Activated T-helper 2 cell treated with anti-CD3 and anti-CD28 coated beads, Interferon-gamma antibody, Interleukin-2, Interleukin-4, amounts not matched to agents 10 μg/mL and 5 μg/mL and 100 μg/mL, durations not matched to agents 14 hours and 24 hours and 36 hours (primary cell): ENCODE measurements at regions of chr1 and their contacts with region 1.

Region 1: GRCh38 chr1:223748773-223749733 is 36.7 kb downstream of the CAPN2 start:
- DNase-seq: peak; percentile 45
- H3K4me3 Mint-ChIP-seq: peak overlapping the region; percentile 53
- H3K27ac Mint-ChIP-seq: peak overlapping the region; percentile 7
- H3K4me1 Mint-ChIP-seq: peaks cover 15% of the 10 kb centered on the region
- H3K27me3 Mint-ChIP-seq: no peaks in the 10 kb centered on the region

Region 2: DNA sequence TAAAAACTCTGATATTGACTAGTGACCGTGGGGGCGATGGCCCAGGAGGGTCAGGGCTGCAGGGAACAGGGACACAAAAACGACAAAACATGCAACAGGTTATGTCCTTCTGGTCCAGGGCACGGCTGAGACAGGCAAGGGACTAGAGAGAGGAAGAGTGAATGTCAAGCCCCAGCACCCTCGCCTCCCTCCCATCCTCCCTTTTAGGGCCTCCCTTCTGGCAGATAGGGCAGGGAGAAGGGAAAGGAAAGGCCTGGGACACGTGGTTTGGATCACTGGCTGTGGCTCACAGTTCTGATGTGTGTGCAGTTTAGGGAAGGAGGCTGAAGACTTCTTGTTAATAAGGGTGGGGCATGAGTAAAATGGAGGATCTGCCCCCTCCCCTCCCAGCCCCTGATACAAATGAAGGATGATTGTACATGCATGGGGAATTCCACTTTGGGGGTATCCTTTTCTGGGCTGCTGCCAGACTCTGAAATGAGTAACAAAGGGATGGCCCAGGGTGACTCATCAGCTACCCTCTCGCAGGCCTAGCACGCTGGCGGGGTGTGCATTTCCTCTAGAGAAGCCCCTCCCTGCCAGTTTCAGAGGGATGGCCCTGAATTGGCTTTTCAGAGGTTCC is 22.6 kb before region 1 on chr1:
- intact Hi-C with region 1: loop called (anchors 2 kb)
- DNase-seq: peak; percentile 79
- H3K4me3 Mint-ChIP-seq: peak overlapping the region; percentile 72
- H3K27ac Mint-ChIP-seq: peak overlapping the region; percentile 97
- H3K4me1 Mint-ChIP-seq: peaks cover 64% of the 10 kb centered on the region
- H3K27me3 Mint-ChIP-seq: no peaks in the 10 kb centered on the region